ENCODE measurements at regions of chr4 and their contacts with region 1.

Region 1: DNA sequence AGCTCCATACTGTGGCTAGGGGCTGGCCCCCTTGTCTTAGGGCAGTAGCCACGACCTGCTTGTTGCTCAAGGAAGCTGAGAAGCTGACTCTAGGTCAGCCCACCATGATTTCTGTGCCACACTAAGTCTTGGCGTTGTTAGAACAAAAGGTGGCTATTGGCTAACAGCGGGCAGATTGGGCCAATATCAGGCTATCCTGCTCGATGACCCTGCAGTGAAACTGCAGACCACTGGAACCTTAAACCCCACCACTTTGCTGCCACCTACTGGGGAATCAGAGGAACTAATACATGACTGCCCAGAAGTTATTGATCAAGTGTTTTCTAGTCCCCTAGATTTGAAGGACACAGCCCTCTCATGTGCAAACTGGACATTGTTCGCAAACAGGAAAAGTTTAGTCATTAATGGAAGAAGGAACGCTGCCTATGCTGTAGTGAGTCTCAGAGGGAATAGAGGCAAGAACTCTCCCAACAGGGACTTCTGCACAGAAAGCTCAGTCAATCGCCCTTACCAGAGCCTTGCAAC is 17.0 kb upstream of the PAPSS1 start:
- DNase-seq: peak; percentile 39
- ATAC-seq: peak; percentile 68
- H3K4me3 Mint-ChIP-seq: no peak overlapping the region
- H3K27ac Mint-ChIP-seq: no peak overlapping the region
- H3K4me1 Mint-ChIP-seq: no peaks in the 10 kb centered on the region
- H3K27me3 Mint-ChIP-seq: no peaks in the 10 kb centered on the region
- CTCF ChIP-seq: peak; percentile 81

Region 2: DNA sequence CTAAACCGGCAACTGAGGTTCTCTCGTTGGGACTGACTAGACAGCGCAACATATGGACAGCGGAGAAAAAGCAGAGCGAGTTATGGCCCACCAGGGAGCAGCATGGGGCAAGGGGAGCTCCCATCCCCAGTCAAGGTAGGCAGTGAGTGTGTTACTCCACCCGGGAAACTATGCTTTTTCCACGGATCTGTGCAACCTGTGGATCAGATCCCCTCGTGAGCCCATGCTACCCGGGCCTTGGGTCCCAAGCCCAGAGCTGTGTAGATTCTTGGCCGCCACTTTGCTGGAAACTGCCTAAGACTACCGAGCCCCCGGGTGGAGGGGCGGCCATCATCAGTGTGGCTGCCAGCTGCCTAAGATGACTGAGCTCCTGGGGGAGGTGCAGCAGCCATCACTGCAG is 157.9 kb before region 1 on chr4:
- CTCF ChIA-PET with region 1: no interaction called
- POLR2A ChIA-PET with region 1: no interaction called
- intact Hi-C with region 1: loop called (anchors 10 kb)
- DNase-seq: no peak
- ATAC-seq: no peak
- H3K4me3 Mint-ChIP-seq: no peak overlapping the region
- H3K27ac Mint-ChIP-seq: no peak overlapping the region
- H3K4me1 Mint-ChIP-seq: no peaks in the 10 kb centered on the region
- H3K27me3 Mint-ChIP-seq: peaks cover 5% of the 10 kb centered on the region
- CTCF ChIP-seq: no peak

Region 3: GRCh38 chr4:107709916-107710315 is 27.1 kb before region 1 on chr4:
- CTCF ChIA-PET with region 1: interaction called, 14 read pairs
- POLR2A ChIA-PET with region 1: no interaction called
- intact Hi-C with region 1: no loop called
- DNase-seq: no peak
- ATAC-seq: peak; percentile 24
- H3K4me3 Mint-ChIP-seq: no peak overlapping the region
- H3K27ac Mint-ChIP-seq: no peak overlapping the region
- H3K4me1 Mint-ChIP-seq: peaks cover 18% of the 10 kb centered on the region
- H3K27me3 Mint-ChIP-seq: no peaks in the 10 kb centered on the region
- CTCF ChIP-seq: no peak

Region 4: GRCh38 chr4:107719922-107720722 is 16.9 kb before region 1 on chr4 and contains the start of gene PAPSS1:
- CTCF ChIA-PET with region 1: interaction called, 59 read pairs
- POLR2A ChIA-PET with region 1: interaction called, 5 read pairs
- intact Hi-C with region 1: no loop called
- DNase-seq: peak; percentile 94
- ATAC-seq: peak; percentile 89
- H3K4me3 Mint-ChIP-seq: peak within 1 kb of the TSS; percentile 92
- H3K27ac Mint-ChIP-seq: peak within 1 kb of the TSS; percentile 94
- H3K4me1 Mint-ChIP-seq: peaks cover 35% of the 10 kb centered on the region
- H3K27me3 Mint-ChIP-seq: no peaks in the 10 kb centered on the region
- CTCF ChIP-seq: no peak
- total RNA-seq, gene PAPSS1: 29.5 to 31.1 TPM

Region 5: DNA sequence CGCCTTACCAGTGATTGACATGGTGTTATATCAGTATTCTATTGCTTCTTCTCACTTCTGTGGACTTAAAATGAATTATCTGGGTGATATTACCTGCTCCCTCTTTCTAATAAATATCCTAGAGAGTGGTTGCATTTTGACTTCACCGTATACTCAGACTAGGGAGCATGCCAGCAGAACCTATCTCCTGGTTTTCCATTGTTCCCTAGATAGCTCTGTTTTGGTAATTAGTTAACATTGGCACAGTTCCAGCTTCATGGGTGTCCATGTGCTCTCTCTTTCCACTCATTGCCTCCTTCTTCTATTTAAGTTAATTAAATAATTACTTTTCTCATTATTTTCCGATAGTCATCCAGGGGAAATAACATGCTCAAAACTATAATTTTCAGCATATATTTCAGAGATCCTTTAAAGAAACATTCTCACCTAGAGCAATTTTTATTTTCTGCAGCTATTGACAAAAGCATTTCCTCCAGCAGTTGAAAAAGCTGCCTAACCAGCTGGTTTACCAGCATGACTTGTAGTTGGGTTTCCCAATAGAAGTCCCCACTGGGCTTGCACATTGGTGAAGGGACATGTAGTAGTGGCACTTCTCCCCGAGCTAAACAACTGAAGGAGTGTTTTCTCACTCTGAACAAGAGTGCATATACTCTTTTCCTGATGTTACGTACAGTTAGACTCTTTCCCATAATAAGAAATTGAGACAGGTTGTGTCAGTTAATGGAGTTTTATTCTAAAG is 10.9 kb after region 1 on chr4:
- CTCF ChIA-PET with region 1: interaction called, 36 read pairs
- POLR2A ChIA-PET with region 1: no interaction called
- intact Hi-C with region 1: no loop called
- DNase-seq: no peak
- ATAC-seq: no peak
- H3K4me3 Mint-ChIP-seq: no peak overlapping the region
- H3K27ac Mint-ChIP-seq: no peak overlapping the region
- H3K4me1 Mint-ChIP-seq: peaks cover 3% of the 10 kb centered on the region
- H3K27me3 Mint-ChIP-seq: peaks cover 18% of the 10 kb centered on the region
- CTCF ChIP-seq: no peak

Measured in activated CD8-positive, alpha-beta T cell treated with anti-CD3 and anti-CD28 coated beads for 36 hours (primary cell).